PC-3 (cell line): ENCODE measurements at regions of chr17 and their contacts with region 1.

Region 1: DNA sequence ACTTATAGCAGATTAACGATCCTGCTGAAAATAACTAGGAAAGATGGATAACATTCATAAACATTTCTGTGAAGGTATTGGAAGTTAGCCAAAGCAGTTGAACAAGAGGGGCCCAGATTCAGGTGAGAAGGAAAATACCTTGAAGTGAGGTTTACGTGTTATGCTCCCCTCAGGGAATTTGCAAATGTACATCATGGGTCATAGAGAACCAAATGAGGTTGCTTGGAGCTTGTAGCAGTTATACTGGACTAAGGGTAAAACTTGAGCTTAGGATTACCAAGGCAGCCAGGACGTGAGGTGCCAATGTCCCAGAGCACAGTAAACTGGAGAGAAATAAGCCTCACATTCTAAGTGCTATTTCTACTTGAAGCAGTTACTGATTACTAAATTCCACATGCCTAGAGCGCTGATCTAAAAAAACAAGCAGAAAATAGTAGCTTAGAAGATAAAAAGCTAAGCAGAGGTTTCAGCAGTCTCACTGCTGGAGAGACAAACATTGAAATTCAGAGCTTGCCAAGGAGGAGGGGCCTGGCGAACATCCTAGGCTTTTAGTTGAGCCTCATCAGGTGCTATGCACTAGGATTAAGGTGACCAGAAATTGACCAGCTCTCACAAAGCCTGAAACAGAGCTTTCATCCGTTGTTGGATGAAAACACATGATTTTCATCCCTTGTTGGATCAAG is 136.7 kb upstream of the FAM20A start:
- DNase-seq: no peak
- ATAC-seq: no peak
- H3K4me3 ChIP-seq: no peak overlapping the region
- H3K27ac ChIP-seq: no peak overlapping the region
- H3K4me1 ChIP-seq: no peaks in the 10 kb centered on the region
- H3K27me3 ChIP-seq: no peaks in the 10 kb centered on the region
- CTCF ChIP-seq: no peak

Region 2: GRCh38 chr17:68676856-68677255 is 61.0 kb before region 1 on chr17:
- CTCF ChIA-PET with region 1: no interaction called
- POLR2A ChIA-PET with region 1: no interaction called
- intact Hi-C with region 1: loop called (anchors 5 kb)
- DNase-seq: no peak
- ATAC-seq: no peak
- H3K4me3 ChIP-seq: no peak overlapping the region
- H3K27ac ChIP-seq: no peak overlapping the region
- H3K4me1 ChIP-seq: no peaks in the 10 kb centered on the region
- H3K27me3 ChIP-seq: peaks cover 65% of the 10 kb centered on the region
- CTCF ChIP-seq: no peak

Region 3: DNA sequence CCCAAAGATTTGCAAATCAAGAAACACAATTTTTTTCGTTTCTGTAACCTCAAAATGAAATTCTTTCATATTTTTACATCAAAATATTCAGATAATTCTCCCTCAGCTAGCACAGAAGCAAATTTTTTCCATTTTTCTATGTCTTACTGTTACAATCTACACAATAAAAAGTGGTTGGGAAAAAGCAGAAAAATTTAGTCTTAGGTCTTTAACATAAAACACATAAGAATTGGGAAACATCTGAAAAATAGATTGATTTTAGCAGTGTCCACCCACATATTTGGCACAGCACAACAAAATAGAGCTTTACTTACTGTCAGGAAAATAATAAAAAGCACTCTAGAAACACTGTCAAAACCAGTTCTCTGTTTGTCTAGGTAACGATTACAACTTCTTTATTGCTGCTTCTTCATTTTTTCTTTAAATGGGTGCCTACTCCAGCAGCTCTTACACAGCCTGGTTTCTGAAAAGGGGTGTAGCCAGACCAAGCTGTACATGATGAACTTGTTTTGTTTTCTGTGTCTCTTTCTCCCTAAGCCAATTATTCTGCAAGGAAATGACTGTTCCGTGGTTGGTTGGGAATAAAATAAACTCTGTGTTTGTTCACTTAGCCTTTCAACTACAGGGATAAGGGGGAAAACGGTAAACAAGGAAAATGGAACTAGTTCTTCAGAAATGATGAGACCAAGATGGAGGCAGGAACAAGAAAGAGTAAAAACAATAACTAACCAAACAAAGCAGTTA is 403.7 kb after region 1 on chr17 and contains the start of gene ABCA6:
- CTCF ChIA-PET with region 1: no interaction called
- POLR2A ChIA-PET with region 1: no interaction called
- intact Hi-C with region 1: no loop called
- DNase-seq: no peak
- ATAC-seq: peak; percentile 46; the same call in 1 of the 2 replicates
- H3K4me3 ChIP-seq: no peak within 1 kb of the TSS
- H3K27ac ChIP-seq: no peak within 1 kb of the TSS
- H3K4me1 ChIP-seq: no peaks in the 10 kb centered on the region
- H3K27me3 ChIP-seq: peaks cover 34% of the 10 kb centered on the region
- CTCF ChIP-seq: no peak
- total RNA-seq, gene ABCA6: not detected in 2 replicates